Endothelial cell of umbilical vein (primary cell): ENCODE measurements at regions of chr12 and their contacts with region 1.

Region 1: GRCh38 chr12:68495336-68496070 is 115.2 kb upstream of the RAP1B start:
- DNase-seq: peak; percentile 73
- H3K4me3 ChIP-seq: no peak overlapping the region
- H3K27ac ChIP-seq: no peak overlapping the region
- H3K4me1 ChIP-seq: peaks cover 7% of the 10 kb centered on the region
- H3K27me3 ChIP-seq: peaks cover 0 to 13% of the 10 kb centered on the region in 2 experiments
- CTCF ChIP-seq: no peak
- POLR2A ChIP-seq: no peak

Region 2: DNA sequence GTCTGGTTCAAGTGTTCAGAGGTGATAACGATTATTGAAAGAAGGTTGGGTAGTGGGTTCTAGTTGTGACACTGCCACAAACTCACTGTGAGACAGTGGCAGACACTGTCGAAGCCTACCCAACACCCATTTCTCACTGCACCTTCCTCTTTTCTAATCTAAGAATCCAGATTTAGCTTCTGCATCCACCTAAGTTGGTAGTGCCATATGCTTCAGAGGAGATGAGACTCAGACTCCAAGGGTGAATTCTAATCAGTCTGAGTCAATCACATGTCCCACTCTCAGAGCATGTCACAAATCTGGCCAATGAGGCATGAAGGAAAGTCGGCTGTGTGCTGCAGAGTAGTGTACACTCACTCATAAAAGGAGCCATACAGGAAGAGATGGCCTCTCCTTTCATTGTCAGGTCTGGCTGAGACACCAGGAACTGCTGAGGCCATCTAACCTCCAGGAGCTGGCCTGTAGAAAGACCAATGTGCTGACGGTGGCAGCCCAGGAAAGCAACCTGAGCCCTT is 13.1 kb after region 1 on chr12:
- CTCF ChIA-PET with region 1: interaction called, 13 read pairs
- POLR2A ChIA-PET with region 1: no interaction called
- dilution Hi-C with region 1: no loop called
- intact Hi-C with region 1: no loop called
- DNase-seq: no peak
- H3K4me3 ChIP-seq: no peak overlapping the region
- H3K27ac ChIP-seq: no peak overlapping the region
- H3K4me1 ChIP-seq: no peaks in the 10 kb centered on the region
- H3K27me3 ChIP-seq: peaks cover 0 to 2% of the 10 kb centered on the region in 2 experiments
- CTCF ChIP-seq: no peak
- POLR2A ChIP-seq: no peak